Sigmoid colon (tissue), 7 donors: ENCODE measurements at regions of chr20 and their contacts with region 1.

Region 1: GRCh38 chr20:3173610-3174441 is 477 bp upstream of the LZTS3 start:
- DNase-seq: peak; percentile 94
- H3K4me3 ChIP-seq: peak overlapping the region; percentile 65 to 94 (median 88)
- H3K27ac ChIP-seq: peak overlapping the region; percentile 74 to 81 (median 78)
- H3K4me1 ChIP-seq: peaks cover 0 to 26% (median 21%) of the 10 kb centered on the region in 4 donors
- H3K27me3 ChIP-seq: peaks cover 0 to 10% (median 0%) of the 10 kb centered on the region in 3 donors
- CTCF ChIP-seq: peak in 3 of 4 experiments; percentile 23 to 27 (median 24)
- EP300 ChIP-seq: peak in 1 of 4 donors; percentile 11
- POLR2A ChIP-seq: no peak

Region 2: DNA sequence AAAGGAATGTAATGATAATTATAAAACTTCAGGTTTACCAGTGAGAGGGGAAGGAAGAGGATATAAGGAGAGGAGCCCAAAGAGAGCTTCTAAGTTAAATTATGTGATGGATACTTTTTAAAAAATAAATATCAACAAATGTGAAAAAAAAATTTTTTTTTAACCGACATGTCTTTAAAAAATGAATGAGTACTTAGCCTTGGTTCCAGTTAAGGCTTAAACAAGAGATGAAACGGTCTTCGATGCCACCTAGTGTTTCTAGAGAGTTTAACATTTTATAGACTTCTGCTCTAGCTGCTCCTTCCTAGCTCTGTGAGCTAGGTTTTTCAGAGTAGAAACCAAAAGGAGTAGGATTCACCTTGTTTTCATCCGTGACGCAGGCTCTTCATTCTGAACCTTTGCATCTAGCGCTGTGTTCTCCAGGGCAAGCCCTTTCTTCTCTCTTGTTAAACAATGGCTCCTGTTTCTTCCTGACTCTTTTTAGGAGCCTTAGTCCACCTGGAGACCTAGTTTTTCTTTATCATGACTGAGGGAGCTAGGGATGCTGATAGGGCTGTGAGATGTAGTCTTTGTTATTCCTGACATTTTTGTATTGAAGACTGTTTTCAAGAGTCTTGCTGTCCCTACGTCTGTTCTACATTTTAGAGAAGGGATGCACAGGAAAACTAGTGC is 172.8 kb before region 1 on chr20:
- intact Hi-C with region 1: no loop called
- DNase-seq: no peak
- H3K4me3 ChIP-seq: no peak overlapping the region
- H3K27ac ChIP-seq: no peak overlapping the region
- H3K4me1 ChIP-seq: no peaks in the 10 kb centered on the region
- H3K27me3 ChIP-seq: no peaks in the 10 kb centered on the region
- CTCF ChIP-seq: peak in 3 of 4 experiments; percentile 13 to 38 (median 31)
- EP300 ChIP-seq: no peak
- POLR2A ChIP-seq: no peak

Region 3: DNA sequence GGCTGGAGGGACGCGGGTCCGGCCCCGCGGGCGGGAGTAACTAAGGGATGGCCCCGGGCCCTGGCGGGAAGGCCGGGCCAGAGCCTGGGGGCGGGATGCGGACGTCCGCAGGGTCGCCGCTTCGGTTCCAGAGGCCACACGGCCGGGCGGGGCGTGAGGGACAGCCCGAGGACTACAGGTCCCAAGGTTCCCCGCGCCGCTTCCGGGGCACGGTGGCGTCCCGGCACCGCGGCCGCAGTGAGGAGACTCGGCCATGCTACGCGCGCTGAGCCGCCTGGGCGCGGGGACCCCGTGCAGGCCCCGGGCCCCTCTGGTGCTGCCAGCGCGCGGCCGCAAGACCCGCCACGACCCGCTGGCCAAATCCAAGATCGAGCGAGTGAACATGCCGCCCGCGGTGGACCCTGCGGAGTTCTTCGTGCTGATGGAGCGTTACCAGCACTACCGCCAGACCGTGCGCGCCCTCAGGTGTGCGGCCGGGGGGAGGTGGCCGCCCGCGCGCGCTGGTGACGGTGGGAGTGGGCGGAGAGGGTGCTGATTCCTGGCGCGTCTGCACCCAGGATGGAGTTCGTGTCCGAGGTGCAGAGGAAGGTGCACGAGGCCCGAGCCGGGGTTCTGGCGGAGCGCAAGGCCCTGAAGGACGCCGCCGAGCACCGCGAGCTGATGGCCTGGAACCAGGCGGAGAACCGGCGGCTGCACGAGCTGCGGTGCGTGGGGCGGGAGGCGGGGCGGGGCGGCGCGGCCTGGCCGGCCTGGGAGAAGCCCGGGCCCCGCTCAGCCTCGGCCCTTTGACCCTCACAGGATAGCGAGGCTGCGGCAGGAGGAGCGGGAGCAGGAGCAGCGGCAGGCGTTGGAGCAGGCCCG is 127.8 kb before region 1 on chr20 and contains the start of gene MRPS26:
- intact Hi-C with region 1: loop called (anchors 5 kb)
- DNase-seq: peak; percentile 93
- H3K4me3 ChIP-seq: peak within 1 kb of the TSS; percentile 74 to 95 (median 86)
- H3K27ac ChIP-seq: peak within 1 kb of the TSS; percentile 86 to 92 (median 89)
- H3K4me1 ChIP-seq: peaks cover 0 to 19% (median 18%) of the 10 kb centered on the region in 4 donors
- H3K27me3 ChIP-seq: no peaks in the 10 kb centered on the region
- CTCF ChIP-seq: no peak
- EP300 ChIP-seq: no peak
- POLR2A ChIP-seq: peak; percentile 34 to 41
- total RNA-seq, gene MRPS26: 33.5 to 71.7 (median 65.0) TPM

Region 4: DNA sequence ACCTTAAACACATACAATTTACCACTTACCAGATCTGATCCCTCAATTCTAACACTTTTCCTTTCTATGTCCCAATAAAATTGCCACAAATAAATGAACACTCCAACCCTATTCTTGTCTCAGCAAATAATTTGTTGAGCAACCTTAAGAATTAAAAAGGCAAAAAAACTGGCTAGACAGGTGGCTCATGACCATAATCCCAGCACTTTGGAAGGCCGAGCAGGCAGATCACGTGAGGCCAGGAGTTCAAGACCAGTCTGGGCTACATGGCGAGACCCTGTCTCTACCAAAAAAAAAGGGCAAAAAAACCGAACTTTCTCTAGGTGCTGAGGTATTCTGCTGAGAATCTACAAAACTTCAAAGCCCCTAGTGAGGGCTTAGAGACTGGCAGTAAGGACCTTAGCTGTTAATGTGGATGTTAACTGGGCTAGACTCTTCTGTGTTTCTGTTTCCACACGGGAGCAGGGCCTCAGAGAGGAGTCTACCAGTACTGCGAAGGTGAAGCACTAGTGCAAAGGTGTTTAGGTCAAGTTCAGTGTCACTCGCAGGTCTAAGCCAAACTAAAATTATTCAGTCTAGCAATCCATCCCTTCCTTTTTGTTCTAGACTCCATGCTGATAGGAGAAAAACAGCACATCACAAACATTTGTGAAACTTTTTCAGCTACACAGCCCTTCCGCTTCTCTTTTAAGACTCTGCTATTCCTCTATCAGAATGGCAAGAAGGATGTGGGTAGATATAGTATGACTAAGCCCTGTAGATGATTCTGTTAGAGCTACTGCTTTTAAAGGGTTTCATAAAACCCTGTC is 16.8 kb before region 1 on chr20:
- intact Hi-C with region 1: loop called (anchors 1 kb)
- DNase-seq: no peak
- H3K4me3 ChIP-seq: no peak overlapping the region
- H3K27ac ChIP-seq: no peak overlapping the region
- H3K4me1 ChIP-seq: peaks cover 0 to 51% (median 45%) of the 10 kb centered on the region in 4 donors
- H3K27me3 ChIP-seq: no peaks in the 10 kb centered on the region
- CTCF ChIP-seq: no peak
- EP300 ChIP-seq: no peak
- POLR2A ChIP-seq: no peak

Region 5: DNA sequence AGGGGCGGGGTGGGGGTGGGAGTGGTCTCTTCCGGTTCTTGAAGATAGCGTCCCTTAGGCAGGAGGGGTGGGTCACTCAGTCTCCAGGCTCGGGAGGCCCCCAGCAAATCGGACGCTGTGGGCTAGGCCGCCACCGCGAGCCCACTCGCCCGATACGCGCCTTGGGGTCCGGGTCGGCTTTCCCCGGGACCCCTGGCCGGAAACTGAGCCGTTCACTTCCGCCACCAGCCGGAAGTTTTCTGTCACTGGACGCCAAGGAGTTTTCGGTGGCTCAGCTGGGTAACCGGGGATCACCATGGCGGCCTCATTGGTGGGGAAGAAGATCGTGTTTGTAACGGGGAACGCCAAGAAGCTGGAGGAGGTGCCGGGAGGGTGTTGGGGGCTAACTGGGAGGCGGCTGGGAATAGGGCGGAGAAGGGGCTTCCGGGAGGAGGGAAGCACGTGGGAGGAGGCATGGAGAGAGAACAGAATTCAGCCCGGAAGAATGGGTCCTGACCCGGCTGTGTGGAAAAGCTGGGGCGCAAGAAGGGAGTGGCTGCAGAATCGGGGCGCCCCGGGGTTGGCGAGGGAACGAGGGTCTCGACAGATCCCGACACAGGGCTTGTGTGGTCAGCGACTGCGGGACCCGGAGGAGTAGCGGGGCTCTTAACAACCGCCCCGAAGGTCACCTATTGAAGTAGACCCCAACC is 35.6 kb after region 1 on chr20 and contains the start of gene ITPA:
- intact Hi-C with region 1: loop called (anchors 5 kb)
- DNase-seq: no peak
- H3K4me3 ChIP-seq: peak within 1 kb of the TSS; percentile 69 to 85 (median 76)
- H3K27ac ChIP-seq: peak within 1 kb of the TSS; percentile 76 to 84 (median 80)
- H3K4me1 ChIP-seq: peaks cover 0 to 16% (median 12%) of the 10 kb centered on the region in 4 donors
- H3K27me3 ChIP-seq: no peaks in the 10 kb centered on the region
- CTCF ChIP-seq: no peak
- EP300 ChIP-seq: no peak
- POLR2A ChIP-seq: no peak
- total RNA-seq, gene ITPA: 17.1 to 31.7 (median 22.6) TPM